Right cardiac atrium (tissue), 5 donors: ENCODE measurements at regions of chr21 and their contacts with region 1.

Region 1: GRCh38 chr21:14864211-14865021 is 200.4 kb downstream of the NRIP1 start:
- DNase-seq: peak; percentile 69 to 88 (median 84)
- ATAC-seq: peak; percentile 88 to 92
- H3K4me3 ChIP-seq: no peak overlapping the region
- H3K27ac ChIP-seq: no peak overlapping the region
- H3K4me1 ChIP-seq: no peaks in the 10 kb centered on the region
- H3K27me3 ChIP-seq: no peaks in the 10 kb centered on the region

Region 2: GRCh38 chr21:14977814-14978213 is 113.4 kb after region 1 on chr21:
- intact Hi-C with region 1: loop called in 1 of 4 experiments (anchors 10 kb)
- DNase-seq: no peak
- ATAC-seq: no peak
- H3K4me3 ChIP-seq: no peak overlapping the region
- H3K27ac ChIP-seq: no peak overlapping the region
- H3K4me1 ChIP-seq: peaks cover 4% of the 10 kb centered on the region
- H3K27me3 ChIP-seq: no peaks in the 10 kb centered on the region

Region 3: GRCh38 chr21:15483138-15483780 is 618.8 kb after region 1 on chr21:
- intact Hi-C with region 1: loop called (anchors 5 to 10 kb)
- DNase-seq: peak; percentile 86 to 94 (median 91)
- ATAC-seq: peak; percentile 99
- H3K4me3 ChIP-seq: no peak overlapping the region
- H3K27ac ChIP-seq: no peak overlapping the region
- H3K4me1 ChIP-seq: no peaks in the 10 kb centered on the region
- H3K27me3 ChIP-seq: no peaks in the 10 kb centered on the region

Region 4: GRCh38 chr21:15592271-15592860 is 728.0 kb after region 1 on chr21:
- intact Hi-C with region 1: loop called in 1 of 4 experiments (anchors 10 kb)
- DNase-seq: no peak
- ATAC-seq: no peak
- H3K4me3 ChIP-seq: no peak overlapping the region
- H3K27ac ChIP-seq: no peak overlapping the region
- H3K4me1 ChIP-seq: no peaks in the 10 kb centered on the region
- H3K27me3 ChIP-seq: no peaks in the 10 kb centered on the region